ENCODE measurements at regions of chr13 and their contacts with region 1.

Region 1: GRCh38 chr13:27341616-27342015 is 71.0 kb downstream of the RASL11A start:
- DNase-seq: no peak
- H3K4me3 ChIP-seq: no peak overlapping the region
- H3K27ac ChIP-seq: no peak overlapping the region
- H3K4me1 ChIP-seq: no peaks in the 10 kb centered on the region
- H3K27me3 ChIP-seq: no peaks in the 10 kb centered on the region
- CTCF ChIP-seq: no peak

Region 2: GRCh38 chr13:27104606-27105005 is 237.0 kb before region 1 on chr13:
- intact Hi-C with region 1: no loop called
- DNase-seq: no peak
- H3K4me3 ChIP-seq: no peak overlapping the region
- H3K27ac ChIP-seq: no peak overlapping the region
- H3K4me1 ChIP-seq: no peaks in the 10 kb centered on the region
- H3K27me3 ChIP-seq: no peaks in the 10 kb centered on the region
- CTCF ChIP-seq: no peak

Region 3: GRCh38 chr13:27283906-27284493 is 57.6 kb before region 1 on chr13:
- intact Hi-C with region 1: loop called (anchors 10 kb)
- DNase-seq: peak; percentile 33
- H3K4me3 ChIP-seq: no peak overlapping the region
- H3K27ac ChIP-seq: no peak overlapping the region
- H3K4me1 ChIP-seq: no peaks in the 10 kb centered on the region
- H3K27me3 ChIP-seq: no peaks in the 10 kb centered on the region
- CTCF ChIP-seq: no peak